Activated T-helper 2 cell treated with anti-CD3 and anti-CD28 coated beads, Interferon-gamma antibody, Interleukin-2, Interleukin-4, amounts not matched to agents 10 μg/mL and 5 μg/mL and 100 μg/mL, durations not matched to agents 14 hours and 24 hours and 36 hours (primary cell): ENCODE measurements at regions of chr17 and their contacts with region 1.

Region 1: GRCh38 chr17:16453493-16453851 is 38.1 kb downstream of the TRPV2 start:
- DNase-seq: no peak
- H3K4me3 Mint-ChIP-seq: no peak overlapping the region
- H3K27ac Mint-ChIP-seq: no peak overlapping the region
- H3K4me1 Mint-ChIP-seq: peaks cover 5% of the 10 kb centered on the region
- H3K27me3 Mint-ChIP-seq: no peaks in the 10 kb centered on the region

Region 2: GRCh38 chr17:16122697-16123434 is 330.6 kb before region 1 on chr17:
- intact Hi-C with region 1: no loop called
- DNase-seq: no peak
- H3K4me3 Mint-ChIP-seq: no peak overlapping the region
- H3K27ac Mint-ChIP-seq: no peak overlapping the region
- H3K4me1 Mint-ChIP-seq: no peaks in the 10 kb centered on the region
- H3K27me3 Mint-ChIP-seq: no peaks in the 10 kb centered on the region

Region 3: GRCh38 chr17:16521070-16521727 is 67.7 kb after region 1 on chr17:
- intact Hi-C with region 1: loop called (anchors 1 kb)
- DNase-seq: peak; percentile 47
- H3K4me3 Mint-ChIP-seq: no peak overlapping the region
- H3K27ac Mint-ChIP-seq: no peak overlapping the region
- H3K4me1 Mint-ChIP-seq: peaks cover 8% of the 10 kb centered on the region
- H3K27me3 Mint-ChIP-seq: peaks cover 24% of the 10 kb centered on the region